ENCODE measurements at regions of chr1 and their contacts with region 1.

Region 1: DNA sequence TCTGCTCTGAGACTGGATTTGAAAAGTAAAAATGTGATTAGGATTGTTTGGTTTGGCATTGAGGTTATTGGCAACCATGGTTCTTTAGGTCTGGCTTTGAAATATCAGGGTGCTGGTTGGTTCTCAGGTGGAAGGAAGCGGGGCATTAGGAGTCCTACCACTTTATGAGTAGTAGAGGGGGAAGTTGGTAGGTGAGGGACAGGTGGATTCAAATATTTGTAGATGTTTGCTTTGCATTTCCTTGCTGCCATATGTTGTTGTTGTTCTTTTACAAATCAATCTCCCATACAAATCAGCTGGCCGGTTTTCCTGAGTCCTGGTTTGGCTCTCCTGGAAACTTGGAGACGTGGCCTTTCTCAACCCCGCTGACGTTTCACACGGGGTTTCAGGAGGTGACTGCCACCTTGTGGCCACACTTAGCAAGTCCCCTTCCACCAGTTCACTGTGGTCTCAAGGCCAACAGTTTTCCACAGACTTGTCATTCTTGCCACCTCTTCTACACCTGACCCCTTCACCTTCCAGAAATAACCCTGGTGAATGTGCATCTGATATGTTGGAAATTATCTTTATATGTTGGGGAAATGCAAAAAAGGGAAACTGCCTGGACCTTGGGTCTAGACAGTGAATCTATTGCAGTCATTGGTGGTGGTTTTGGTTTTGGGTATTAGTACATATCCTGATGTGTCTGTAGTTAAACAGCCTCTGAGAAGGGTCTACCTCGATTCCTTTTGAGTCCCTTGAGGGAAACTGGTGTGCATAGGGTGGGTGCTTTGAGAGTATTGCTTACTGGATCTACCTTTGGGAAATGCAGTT is 127.0 kb upstream of the KIAA0040 start:
- DNase-seq: peak; percentile 21 to 86 (median 60)
- ATAC-seq: peak; percentile 75 to 82 (median 79)
- H3K4me3 ChIP-seq: no peak overlapping the region
- H3K4me3 Mint-ChIP-seq: no peak overlapping the region
- H3K27ac ChIP-seq: no peak overlapping the region
- H3K27ac Mint-ChIP-seq: no peak overlapping the region
- H3K4me1 ChIP-seq: peaks cover 2 to 5% of the 10 kb centered on the region in 2 experiments
- H3K4me1 Mint-ChIP-seq: peaks cover 7 to 12% (median 11%) of the 10 kb centered on the region in 3 donors
- H3K27me3 ChIP-seq: peaks cover 0 to 6% of the 10 kb centered on the region in 2 experiments
- H3K27me3 Mint-ChIP-seq: peaks cover 4% of the 10 kb centered on the region in 2 donors

Region 2: GRCh38 chr1:175146529-175147213 is 173.0 kb before region 1 on chr1:
- CTCF ChIA-PET with region 1: interaction called, 124 to 237 read pairs
- POLR2A ChIA-PET with region 1: no interaction called
- DNase-seq: peak; percentile 15 to 77 (median 58)
- ATAC-seq: peak; percentile 75 to 80 (median 78)
- H3K4me3 ChIP-seq: no peak overlapping the region
- H3K4me3 Mint-ChIP-seq: no peak overlapping the region
- H3K27ac ChIP-seq: no peak overlapping the region
- H3K27ac Mint-ChIP-seq: no peak overlapping the region
- H3K4me1 ChIP-seq: peaks cover 0 to 3% of the 10 kb centered on the region in 2 experiments
- H3K4me1 Mint-ChIP-seq: peaks cover 0 to 8% (median 2%) of the 10 kb centered on the region in 3 donors
- H3K27me3 ChIP-seq: peaks cover 0 to 30% of the 10 kb centered on the region in 2 experiments
- H3K27me3 Mint-ChIP-seq: peaks cover 20 to 22% of the 10 kb centered on the region in 2 donors

Region 3: DNA sequence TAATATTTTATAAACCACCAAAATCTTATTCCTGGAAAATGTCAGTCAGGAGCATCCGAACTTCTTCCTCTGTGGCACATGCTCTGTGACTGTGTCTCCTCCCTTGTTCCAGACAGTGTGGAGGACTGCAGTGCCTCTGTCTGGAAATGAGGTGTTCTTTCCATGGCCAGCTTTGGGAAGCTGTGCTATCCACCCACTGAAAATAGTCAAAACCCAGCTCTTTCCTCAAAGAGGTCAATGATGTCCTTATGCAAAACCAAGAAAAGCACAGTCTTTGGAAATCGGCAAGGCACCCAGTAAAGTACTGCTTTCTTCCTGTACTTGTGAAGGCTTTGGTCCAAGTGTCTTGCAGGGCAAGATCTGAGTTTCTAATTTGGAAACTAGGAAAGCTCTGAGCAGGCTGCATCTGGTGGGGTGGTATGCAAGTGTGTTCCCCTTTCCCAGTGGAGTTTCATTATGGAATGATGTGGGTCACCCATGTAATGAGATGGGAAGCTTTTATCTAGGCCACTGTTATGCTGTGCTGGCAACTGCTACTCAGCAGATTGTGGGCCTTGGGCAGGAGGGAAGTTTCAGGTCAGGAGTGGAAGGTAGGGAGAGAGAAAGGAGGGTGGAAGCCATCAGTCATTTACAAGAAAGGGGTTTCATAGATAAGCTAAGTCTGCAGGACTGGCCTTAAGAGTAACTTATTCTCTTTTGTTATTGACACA is 133.0 kb before region 1 on chr1:
- CTCF ChIA-PET with region 1: interaction called, 10 to 12 read pairs
- POLR2A ChIA-PET with region 1: interaction called in 1 of 2 experiments, 4 read pairs
- DNase-seq: no peak
- ATAC-seq: no peak
- H3K4me3 ChIP-seq: no peak overlapping the region
- H3K4me3 Mint-ChIP-seq: peak overlapping the region; percentile 18 to 86 (median 37)
- H3K27ac ChIP-seq: no peak overlapping the region
- H3K27ac Mint-ChIP-seq: peak overlapping the region; percentile 51 to 65
- H3K4me1 ChIP-seq: peaks cover 58 to 80% of the 10 kb centered on the region in 2 experiments
- H3K4me1 Mint-ChIP-seq: peaks cover 98 to 99% (median 99%) of the 10 kb centered on the region in 3 donors
- H3K27me3 ChIP-seq: no peaks in the 10 kb centered on the region
- H3K27me3 Mint-ChIP-seq: no peaks in the 10 kb centered on the region

Region 4: DNA sequence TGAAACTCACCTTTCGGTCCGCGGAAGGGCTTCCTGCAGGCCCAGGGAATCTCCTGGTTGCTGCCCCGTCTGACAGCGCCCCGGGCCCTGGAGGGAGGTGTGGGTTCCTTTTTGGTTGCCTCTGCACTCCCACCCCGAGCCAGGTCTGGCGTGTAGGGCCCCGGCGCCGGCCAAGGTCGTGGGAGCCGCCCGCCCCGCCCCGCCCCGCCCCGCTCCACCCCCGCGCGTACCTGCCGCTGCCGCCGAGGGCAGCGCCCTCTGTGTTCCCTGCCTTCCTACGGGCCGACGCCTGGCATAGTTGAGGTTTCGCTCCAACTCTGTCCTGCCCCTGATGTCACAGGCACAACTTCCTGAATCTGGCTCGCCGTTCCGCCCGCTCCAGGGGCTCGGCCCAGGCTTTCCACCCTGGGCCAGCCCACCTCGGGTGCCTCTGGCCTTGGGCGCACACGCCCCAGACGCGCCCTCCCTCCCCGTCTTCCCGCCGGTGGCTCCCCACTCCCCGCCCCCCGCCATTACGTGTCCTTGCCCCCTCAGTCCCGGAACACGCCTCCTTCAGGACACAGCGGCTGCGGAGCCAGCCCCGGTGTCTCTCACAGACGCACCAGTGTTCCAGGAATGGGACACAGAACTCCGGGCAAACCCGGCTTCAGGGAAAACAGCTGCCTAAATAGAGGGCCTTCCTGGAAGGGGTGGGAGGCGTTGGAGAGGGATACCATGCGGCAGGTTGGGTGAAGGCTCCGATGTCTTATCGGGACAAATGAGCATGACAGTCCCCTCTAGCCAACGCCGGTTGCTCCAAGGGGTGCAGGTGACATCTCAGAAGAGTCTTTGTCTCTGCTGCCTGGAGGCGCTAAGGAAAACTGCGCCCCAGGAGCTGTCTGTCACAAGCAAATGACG is 126.7 kb before region 1 on chr1 and contains the start of gene KIAA0040:
- CTCF ChIA-PET with region 1: interaction called, 10 to 12 read pairs
- POLR2A ChIA-PET with region 1: no interaction called
- DNase-seq: peak in 32 of 35 experiments; percentile 8 to 74 (median 34)
- ATAC-seq: peak; percentile 61 to 71 (median 66)
- H3K4me3 ChIP-seq: peak within 1 kb of the TSS; percentile 63 to 97
- H3K4me3 Mint-ChIP-seq: peak within 1 kb of the TSS; percentile 86 to 98 (median 96)
- H3K27ac ChIP-seq: peak within 1 kb of the TSS; percentile 61
- H3K27ac Mint-ChIP-seq: peak within 1 kb of the TSS; percentile 88 to 95
- H3K4me1 ChIP-seq: peaks cover 34 to 47% of the 10 kb centered on the region in 2 experiments
- H3K4me1 Mint-ChIP-seq: peaks cover 51 to 66% (median 56%) of the 10 kb centered on the region in 3 donors
- H3K27me3 ChIP-seq: no peaks in the 10 kb centered on the region
- H3K27me3 Mint-ChIP-seq: no peaks in the 10 kb centered on the region
- total RNA-seq, gene KIAA0040: 33.0 to 60.0 (median 50.5) TPM

Region 5: GRCh38 chr1:175449306-175449705 is 129.7 kb after region 1 on chr1:
- CTCF ChIA-PET with region 1: no interaction called
- POLR2A ChIA-PET with region 1: no interaction called
- DNase-seq: no peak
- ATAC-seq: no peak
- H3K4me3 ChIP-seq: no peak overlapping the region
- H3K4me3 Mint-ChIP-seq: no peak overlapping the region
- H3K27ac ChIP-seq: no peak overlapping the region
- H3K27ac Mint-ChIP-seq: no peak overlapping the region
- H3K4me1 ChIP-seq: no peaks in the 10 kb centered on the region
- H3K4me1 Mint-ChIP-seq: no peaks in the 10 kb centered on the region
- H3K27me3 ChIP-seq: peaks cover 0 to 5% of the 10 kb centered on the region in 2 experiments
- H3K27me3 Mint-ChIP-seq: peaks cover 0 to 7% of the 10 kb centered on the region in 2 donors